Activated CD4-positive, alpha-beta T cell treated with anti-CD3 and anti-CD28 coated beads for 36 hours (primary cell): ENCODE measurements at regions of chr12 and their contacts with region 1.

Region 1: GRCh38 chr12:120292661-120293531 is at the start of gene RNU4-1:
- DNase-seq: peak; percentile 88
- ATAC-seq: peak; percentile 69
- H3K4me3 Mint-ChIP-seq: no peak within 1 kb of the TSS
- H3K27ac Mint-ChIP-seq: no peak within 1 kb of the TSS
- H3K4me1 Mint-ChIP-seq: peaks cover 7% of the 10 kb centered on the region
- H3K27me3 Mint-ChIP-seq: no peaks in the 10 kb centered on the region
- total RNA-seq, gene RNU4-1: 323 to 1,150 TPM

Region 2: GRCh38 chr12:120012067-120012621 is 280.8 kb before region 1 on chr12:
- CTCF ChIA-PET with region 1: no interaction called
- POLR2A ChIA-PET with region 1: interaction called, 28 read pairs
- intact Hi-C with region 1: loop called (anchors 2 to 5 kb)
- DNase-seq: peak; percentile 87
- ATAC-seq: peak; percentile 70
- H3K4me3 Mint-ChIP-seq: peak overlapping the region; percentile 65
- H3K27ac Mint-ChIP-seq: peak overlapping the region; percentile 99
- H3K4me1 Mint-ChIP-seq: peaks cover 91% of the 10 kb centered on the region
- H3K27me3 Mint-ChIP-seq: no peaks in the 10 kb centered on the region

Region 3: GRCh38 chr12:120194534-120195395 is 98.1 kb before region 1 on chr12 and contains the start of gene GCN1:
- CTCF ChIA-PET with region 1: no interaction called
- POLR2A ChIA-PET with region 1: interaction called, 281 read pairs
- intact Hi-C with region 1: no loop called
- DNase-seq: peak; percentile 93
- ATAC-seq: peak; percentile 81
- H3K4me3 Mint-ChIP-seq: peak within 1 kb of the TSS; percentile 98
- H3K27ac Mint-ChIP-seq: peak within 1 kb of the TSS; percentile 92
- H3K4me1 Mint-ChIP-seq: peaks cover 45% of the 10 kb centered on the region
- H3K27me3 Mint-ChIP-seq: no peaks in the 10 kb centered on the region
- total RNA-seq, gene GCN1: 125 to 139 TPM

Region 4: DNA sequence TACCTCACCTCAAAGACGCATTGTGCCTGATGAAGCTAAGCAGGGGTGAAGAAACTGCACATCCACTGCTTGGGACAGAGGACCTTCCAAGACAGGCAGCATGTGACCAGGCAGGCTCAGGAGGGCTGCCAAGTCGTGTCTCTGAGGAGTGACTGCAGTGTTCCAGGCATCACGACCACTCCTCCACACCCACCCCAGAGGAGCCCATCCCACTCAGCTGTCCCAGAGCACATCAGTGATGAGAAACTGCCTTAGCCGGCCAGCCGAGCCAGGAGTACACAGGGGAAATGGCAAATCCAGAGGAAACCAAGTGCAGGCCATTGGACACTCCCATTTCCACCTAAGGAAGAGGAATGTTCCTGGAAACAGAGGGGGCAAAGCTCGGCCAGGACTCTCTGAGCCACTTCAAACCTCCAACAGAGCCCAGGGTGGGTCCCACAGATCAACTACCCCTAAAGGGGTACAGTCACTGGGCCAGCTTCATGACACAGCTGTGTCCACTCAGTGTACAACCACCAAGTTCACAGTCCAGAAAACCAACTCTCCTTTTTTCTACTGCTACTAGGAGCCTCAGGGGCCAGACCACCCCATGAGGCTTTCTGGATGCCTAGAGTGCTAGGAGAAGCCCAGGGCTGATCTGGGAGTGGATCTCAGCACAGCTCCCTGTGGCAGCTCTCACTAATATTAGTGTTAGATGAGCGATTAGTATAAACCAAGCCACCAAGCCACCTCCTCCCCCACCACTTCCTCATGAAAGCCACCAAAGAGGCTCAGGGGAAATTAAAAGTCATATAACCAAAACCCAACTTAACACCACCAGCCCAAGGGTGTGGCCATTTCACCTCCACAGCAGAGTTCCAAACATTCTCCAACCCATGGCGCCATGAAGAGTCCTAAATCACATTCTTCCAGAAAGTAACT is 42.8 kb before region 1 on chr12:
- CTCF ChIA-PET with region 1: interaction called, 4 read pairs
- POLR2A ChIA-PET with region 1: interaction called, 30 read pairs
- intact Hi-C with region 1: no loop called
- DNase-seq: peak; percentile 51
- ATAC-seq: peak; percentile 10
- H3K4me3 Mint-ChIP-seq: peak overlapping the region; percentile 10
- H3K27ac Mint-ChIP-seq: peak overlapping the region; percentile 74
- H3K4me1 Mint-ChIP-seq: peaks cover 80% of the 10 kb centered on the region
- H3K27me3 Mint-ChIP-seq: no peaks in the 10 kb centered on the region

Region 5: GRCh38 chr12:120350576-120351350 is 57.9 kb after region 1 on chr12:
- CTCF ChIA-PET with region 1: no interaction called
- POLR2A ChIA-PET with region 1: no interaction called
- intact Hi-C with region 1: no loop called
- DNase-seq: no peak
- ATAC-seq: no peak
- H3K4me3 Mint-ChIP-seq: no peak overlapping the region
- H3K27ac Mint-ChIP-seq: no peak overlapping the region
- H3K4me1 Mint-ChIP-seq: no peaks in the 10 kb centered on the region
- H3K27me3 Mint-ChIP-seq: peaks cover 3% of the 10 kb centered on the region

Region 6: GRCh38 chr12:120367233-120367923 is 74.5 kb after region 1 on chr12:
- CTCF ChIA-PET with region 1: no interaction called
- POLR2A ChIA-PET with region 1: interaction called, 12 read pairs
- intact Hi-C with region 1: no loop called
- DNase-seq: peak; percentile 39
- ATAC-seq: peak; percentile 24
- H3K4me3 Mint-ChIP-seq: peak overlapping the region; percentile 58
- H3K27ac Mint-ChIP-seq: peak overlapping the region; percentile 62
- H3K4me1 Mint-ChIP-seq: peaks cover 16% of the 10 kb centered on the region
- H3K27me3 Mint-ChIP-seq: peaks cover 70% of the 10 kb centered on the region

Region 7: DNA sequence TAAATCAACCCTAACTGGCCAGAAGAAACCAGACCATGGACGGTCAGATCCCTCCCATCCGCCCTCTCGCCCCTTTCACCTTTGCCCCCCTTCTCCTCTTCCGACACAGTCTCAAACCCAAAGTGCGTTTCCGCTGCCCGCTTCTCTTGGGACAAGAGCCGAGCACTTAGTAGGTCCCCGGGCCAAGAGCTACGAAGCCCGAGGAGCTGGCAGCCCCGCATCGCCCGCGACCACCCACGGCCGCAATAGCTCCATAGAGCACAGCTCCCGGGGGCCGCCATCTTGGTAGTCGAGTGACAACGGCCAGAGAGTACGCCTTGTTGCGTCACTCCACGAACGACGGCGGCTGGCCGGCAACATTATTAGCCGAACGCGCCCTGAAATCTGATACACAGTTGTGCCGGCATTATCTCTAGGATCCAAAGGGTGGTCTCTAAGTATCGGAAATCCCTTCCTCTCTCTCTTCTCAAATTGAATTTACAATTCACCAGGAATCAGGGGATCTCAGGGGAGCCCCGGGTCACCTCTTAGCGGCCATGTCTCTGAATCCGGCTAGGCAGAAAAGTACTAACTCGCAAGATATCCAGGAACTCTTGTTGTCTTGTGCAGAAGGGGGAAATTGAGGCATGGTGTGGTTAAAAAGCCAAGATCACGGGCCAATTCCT is 236.1 kb after region 1 on chr12 and contains the start of gene COQ5:
- CTCF ChIA-PET with region 1: no interaction called
- POLR2A ChIA-PET with region 1: interaction called, 10 read pairs
- intact Hi-C with region 1: loop called in 1 of 2 experiments (anchors 1 kb)
- DNase-seq: peak; percentile 93
- ATAC-seq: peak; percentile 93
- H3K4me3 Mint-ChIP-seq: peak within 1 kb of the TSS; percentile 99
- H3K27ac Mint-ChIP-seq: peak within 1 kb of the TSS; percentile 100
- H3K4me1 Mint-ChIP-seq: peaks cover 21% of the 10 kb centered on the region
- H3K27me3 Mint-ChIP-seq: no peaks in the 10 kb centered on the region
- total RNA-seq, gene COQ5: 31.3 to 32.6 TPM